GM12878 (cell line): ENCODE measurements at regions of chr1 and their contacts with region 1.

Region 1: GRCh38 chr1:110209715-110210603 is at the start of gene KCNC4:
- DNase-seq: peak; percentile 65
- ATAC-seq: peak; percentile 91
- H3K4me3 ChIP-seq: peak within 1 kb of the TSS; percentile 73
- H3K27ac ChIP-seq: no peak within 1 kb of the TSS
- H3K4me1 ChIP-seq: peaks cover 4% of the 10 kb centered on the region; the same call in 1 of the 2 replicates
- H3K27me3 ChIP-seq: peaks cover 0 to 14% of the 10 kb centered on the region in 2 experiments; a peak in 1 of 4 replicates
- CTCF ChIP-seq: no peak
- EP300 ChIP-seq: no peak; a peak in 1 of 4 replicates
- POLR2A ChIP-seq: no peak
- RAD21 ChIP-seq: no peak
- polyA plus RNA-seq, gene KCNC4: 0.06 to 0.16 TPM

Region 2: GRCh38 chr1:110130113-110130596 is 79.8 kb before region 1 on chr1:
- CTCF ChIA-PET with region 1: no interaction called
- POLR2A ChIA-PET with region 1: no interaction called
- RAD21 ChIA-PET with region 1: no interaction called
- SMC1A ChIA-PET with region 1: no interaction called
- in situ Hi-C with region 1: no loop called
- intact Hi-C with region 1: no loop called
- DNase-seq: no peak
- ATAC-seq: no peak
- H3K4me3 ChIP-seq: no peak overlapping the region
- H3K27ac ChIP-seq: no peak overlapping the region
- H3K4me1 ChIP-seq: no peaks in the 10 kb centered on the region
- H3K27me3 ChIP-seq: peaks cover 0 to 5% of the 10 kb centered on the region in 2 experiments; a peak in 3 of 4 replicates
- CTCF ChIP-seq: no peak
- EP300 ChIP-seq: no peak
- POLR2A ChIP-seq: no peak
- RAD21 ChIP-seq: no peak

Region 3: GRCh38 chr1:110235834-110236682 is 26.1 kb after region 1 on chr1:
- CTCF ChIA-PET with region 1: interaction called, 58 read pairs
- POLR2A ChIA-PET with region 1: interaction called, 6 read pairs
- RAD21 ChIA-PET with region 1: interaction called, 18 read pairs
- SMC1A ChIA-PET with region 1: interaction called, 11 read pairs
- in situ Hi-C with region 1: no loop called
- intact Hi-C with region 1: no loop called
- DNase-seq: no peak
- ATAC-seq: peak; percentile 74
- H3K4me3 ChIP-seq: no peak overlapping the region
- H3K27ac ChIP-seq: no peak overlapping the region
- H3K4me1 ChIP-seq: peaks cover 26% of the 10 kb centered on the region
- H3K27me3 ChIP-seq: no peaks in the 10 kb centered on the region
- CTCF ChIP-seq: no peak
- EP300 ChIP-seq: peak in 1 of 2 experiments; percentile 26; a peak in 1 of 4 replicates
- POLR2A ChIP-seq: no peak
- RAD21 ChIP-seq: no peak

Region 4: DNA sequence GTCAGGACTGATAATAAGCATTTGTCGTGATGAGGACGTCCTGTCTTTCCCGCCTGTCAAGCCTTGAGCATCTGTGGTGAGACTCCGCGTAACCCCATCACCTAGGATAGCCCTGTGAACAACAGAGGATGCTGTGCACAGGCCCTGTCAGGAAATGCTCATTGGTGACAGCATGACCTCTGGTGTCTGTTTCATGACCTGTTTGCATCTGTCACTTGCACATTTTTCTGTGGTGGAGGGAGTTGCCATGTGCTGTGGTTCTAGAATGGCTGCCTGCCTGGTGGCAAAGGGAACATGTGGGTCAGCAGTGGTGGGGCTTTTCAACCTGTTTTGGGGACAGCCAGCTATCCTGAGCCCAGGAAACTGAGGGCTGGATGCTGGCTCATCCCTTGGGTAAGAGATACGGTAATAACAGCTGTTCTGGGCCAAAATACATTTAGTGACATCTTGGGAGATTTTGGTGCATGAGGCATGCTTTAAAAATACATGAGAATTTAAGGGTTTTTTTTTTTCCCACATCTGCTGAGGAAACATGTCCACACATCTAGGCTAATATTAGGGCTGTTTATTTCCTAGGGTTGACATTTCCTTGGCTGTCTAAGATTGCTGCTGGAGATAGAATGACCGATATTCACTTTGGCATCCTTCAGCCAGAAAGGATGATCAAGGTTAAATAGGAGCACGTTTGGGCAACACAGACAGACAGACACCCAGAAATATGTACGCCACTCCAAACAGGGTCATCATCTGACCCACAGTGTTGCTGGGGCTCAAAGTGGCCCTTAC is 53.1 kb after region 1 on chr1:
- CTCF ChIA-PET with region 1: interaction called, 45 read pairs
- POLR2A ChIA-PET with region 1: no interaction called
- RAD21 ChIA-PET with region 1: interaction called, 12 read pairs
- SMC1A ChIA-PET with region 1: interaction called, 20 read pairs
- in situ Hi-C with region 1: no loop called
- intact Hi-C with region 1: no loop called
- DNase-seq: no peak
- ATAC-seq: peak; percentile 84
- H3K4me3 ChIP-seq: no peak overlapping the region
- H3K27ac ChIP-seq: no peak overlapping the region
- H3K4me1 ChIP-seq: peaks cover 12% of the 10 kb centered on the region
- H3K27me3 ChIP-seq: no peaks in the 10 kb centered on the region; a peak in 1 of 4 replicates
- CTCF ChIP-seq: peak in 2 of 3 experiments; percentile 12 to 53; a peak in 4 of 6 replicates
- EP300 ChIP-seq: no peak
- POLR2A ChIP-seq: no peak
- RAD21 ChIP-seq: peak; percentile 38

Region 5: DNA sequence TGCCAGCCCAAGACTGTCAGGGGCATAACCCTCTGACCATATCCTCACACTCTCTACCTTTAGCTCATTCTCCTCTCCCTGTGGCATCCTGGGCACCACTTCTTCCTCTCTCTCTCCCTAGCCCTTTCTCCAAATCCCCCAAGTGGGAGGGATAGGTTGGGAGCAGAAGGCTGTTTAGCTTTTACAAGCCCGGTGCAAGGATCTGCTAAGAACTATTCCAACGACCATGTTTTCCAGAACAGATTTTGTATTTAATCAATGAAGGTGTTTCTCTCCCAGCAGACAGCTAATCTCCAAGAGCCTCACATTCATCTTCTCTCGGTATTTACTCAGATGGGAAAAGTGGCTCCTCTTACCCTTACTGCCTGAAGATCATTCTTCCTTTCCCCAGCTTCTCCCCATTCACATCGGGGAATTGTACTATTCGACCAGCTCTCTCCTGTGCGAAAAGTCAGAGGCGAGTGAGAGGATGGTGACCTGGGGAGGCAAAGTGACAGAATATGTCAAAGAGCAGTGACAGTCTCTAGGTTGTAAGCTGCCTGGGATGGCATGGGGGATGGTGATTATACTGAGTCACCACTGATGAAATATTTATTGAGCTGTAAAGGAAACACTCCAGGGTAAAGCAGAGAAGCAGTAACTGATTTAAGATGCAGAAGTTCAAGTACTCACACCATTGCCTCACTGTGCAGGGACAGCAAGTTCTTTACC is 82.2 kb after region 1 on chr1:
- CTCF ChIA-PET with region 1: interaction called, 23 read pairs
- POLR2A ChIA-PET with region 1: interaction called, 4 read pairs
- RAD21 ChIA-PET with region 1: interaction called, 20 read pairs
- SMC1A ChIA-PET with region 1: interaction called, 15 read pairs
- in situ Hi-C with region 1: no loop called
- intact Hi-C with region 1: no loop called
- DNase-seq: no peak
- ATAC-seq: no peak
- H3K4me3 ChIP-seq: no peak overlapping the region
- H3K27ac ChIP-seq: no peak overlapping the region
- H3K4me1 ChIP-seq: no peaks in the 10 kb centered on the region
- H3K27me3 ChIP-seq: no peaks in the 10 kb centered on the region
- CTCF ChIP-seq: no peak
- EP300 ChIP-seq: no peak
- POLR2A ChIP-seq: no peak
- RAD21 ChIP-seq: no peak

Region 6: DNA sequence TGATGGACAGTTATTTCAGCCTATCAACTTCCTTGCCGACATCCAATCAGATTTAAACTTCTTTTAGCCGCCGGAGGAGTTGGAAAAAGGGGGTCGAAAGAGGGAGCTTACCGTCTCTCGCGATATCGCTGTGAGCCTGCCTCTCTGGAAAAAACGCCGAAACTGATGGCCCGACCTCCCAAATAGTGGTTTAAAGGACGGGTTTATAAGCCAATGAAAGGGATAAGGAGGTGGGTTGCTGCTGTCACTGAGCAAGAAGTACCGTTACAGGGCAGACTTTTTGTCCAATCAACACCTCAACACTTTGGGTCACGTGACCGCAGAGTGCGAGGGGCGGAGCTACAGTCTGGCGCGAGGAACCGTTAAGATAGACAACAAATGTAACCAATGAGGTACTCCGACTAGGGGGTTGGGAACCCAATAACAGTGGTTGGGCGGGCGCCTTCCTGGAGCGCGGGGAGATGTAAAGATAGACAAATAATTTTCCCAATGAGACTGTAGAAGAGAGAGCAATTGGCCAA is 129.0 kb after region 1 on chr1 and contains the start of gene RBM15:
- CTCF ChIA-PET with region 1: interaction called, 62 read pairs
- POLR2A ChIA-PET with region 1: interaction called, 21 read pairs
- RAD21 ChIA-PET with region 1: interaction called, 80 read pairs
- SMC1A ChIA-PET with region 1: interaction called, 46 read pairs
- in situ Hi-C with region 1: no loop called
- intact Hi-C with region 1: no loop called
- DNase-seq: peak; percentile 100
- ATAC-seq: peak; percentile 81
- H3K4me3 ChIP-seq: peak within 1 kb of the TSS; percentile 91
- H3K27ac ChIP-seq: peak within 1 kb of the TSS; percentile 97
- H3K4me1 ChIP-seq: peaks cover 5% of the 10 kb centered on the region
- H3K27me3 ChIP-seq: no peaks in the 10 kb centered on the region
- CTCF ChIP-seq: no peak
- EP300 ChIP-seq: peak in 1 of 2 experiments; percentile 45; a peak in 2 of 4 replicates
- POLR2A ChIP-seq: no peak
- RAD21 ChIP-seq: no peak
- polyA plus RNA-seq, gene RBM15: 3.1 to 3.6 TPM

Region 7: DNA sequence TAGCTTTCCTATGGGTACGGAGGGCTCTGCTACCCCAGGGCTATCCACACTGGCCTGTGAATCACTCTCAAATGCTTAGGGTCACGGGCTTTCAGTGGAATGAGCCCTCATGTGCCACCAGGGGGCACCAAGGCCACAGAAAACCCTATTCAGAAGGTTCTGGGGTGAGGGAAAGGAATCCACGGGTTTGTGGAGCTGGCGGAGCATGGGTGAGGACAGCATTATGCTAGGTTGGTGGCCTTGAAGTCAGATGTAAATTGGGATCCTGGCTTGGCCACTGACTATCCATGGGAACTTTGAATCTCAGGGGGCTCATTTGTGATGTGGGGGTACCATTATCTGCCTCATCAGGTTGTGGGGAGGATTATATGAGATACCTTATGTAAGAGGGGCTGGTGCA is 202.6 kb after region 1 on chr1:
- CTCF ChIA-PET with region 1: interaction called, 89 read pairs
- POLR2A ChIA-PET with region 1: no interaction called
- RAD21 ChIA-PET with region 1: interaction called, 25 read pairs
- SMC1A ChIA-PET with region 1: interaction called, 31 read pairs
- in situ Hi-C with region 1: loop called (anchors 5 kb)
- intact Hi-C with region 1: no loop called
- DNase-seq: peak; percentile 24
- ATAC-seq: peak; percentile 88
- H3K4me3 ChIP-seq: no peak overlapping the region
- H3K27ac ChIP-seq: no peak overlapping the region
- H3K4me1 ChIP-seq: peaks cover 6% of the 10 kb centered on the region
- H3K27me3 ChIP-seq: peaks cover 0 to 2% of the 10 kb centered on the region in 2 experiments; a peak in 2 of 4 replicates
- CTCF ChIP-seq: peak; percentile 80 to 83 (median 83)
- EP300 ChIP-seq: no peak
- POLR2A ChIP-seq: no peak
- RAD21 ChIP-seq: peak; percentile 86

Region 8: GRCh38 chr1:110495926-110496600 is 286.1 kb after region 1 on chr1:
- CTCF ChIA-PET with region 1: interaction called, 71 read pairs
- POLR2A ChIA-PET with region 1: no interaction called
- RAD21 ChIA-PET with region 1: interaction called, 22 read pairs
- SMC1A ChIA-PET with region 1: interaction called, 28 read pairs
- in situ Hi-C with region 1: no loop called
- intact Hi-C with region 1: no loop called
- DNase-seq: no peak
- ATAC-seq: peak; percentile 96
- H3K4me3 ChIP-seq: no peak overlapping the region
- H3K27ac ChIP-seq: no peak overlapping the region
- H3K4me1 ChIP-seq: no peaks in the 10 kb centered on the region
- H3K27me3 ChIP-seq: no peaks in the 10 kb centered on the region; a peak in 1 of 4 replicates
- CTCF ChIP-seq: peak; percentile 91 to 93 (median 91)
- EP300 ChIP-seq: no peak
- POLR2A ChIP-seq: no peak
- RAD21 ChIP-seq: peak; percentile 94